CD4-positive, alpha-beta memory T cell (primary cell): ENCODE measurements at regions of chr9 and their contacts with region 1.

Region 1: GRCh38 chr9:114405294-114406034 is 17.7 kb upstream of the AKNA start:
- DNase-seq: peak; percentile 76 to 82 (median 80)
- H3K4me3 ChIP-seq: no peak overlapping the region
- H3K4me3 Mint-ChIP-seq: peak overlapping the region in 2 of 8 donors; percentile 17 to 65
- H3K27ac ChIP-seq: no peak overlapping the region
- H3K27ac Mint-ChIP-seq: peak overlapping the region in 4 of 7 donors; percentile 29 to 79 (median 54)
- H3K4me1 ChIP-seq: peaks cover 9% of the 10 kb centered on the region
- H3K4me1 Mint-ChIP-seq: peaks cover 4 to 6% (median 5%) of the 10 kb centered on the region in 4 donors
- H3K27me3 ChIP-seq: no peaks in the 10 kb centered on the region
- H3K27me3 Mint-ChIP-seq: no peaks in the 10 kb centered on the region

Region 2: GRCh38 chr9:114348906-114349482 is 56.5 kb before region 1 on chr9:
- CTCF ChIA-PET with region 1: interaction called, 7 read pairs
- POLR2A ChIA-PET with region 1: interaction called, 1,614 read pairs
- intact Hi-C with region 1: no loop called
- DNase-seq: peak in 3 of 5 donors; percentile 36 to 82 (median 37)
- H3K4me3 ChIP-seq: no peak overlapping the region
- H3K4me3 Mint-ChIP-seq: peak overlapping the region in 6 of 8 donors; percentile 17 to 47 (median 31)
- H3K27ac ChIP-seq: peak overlapping the region; percentile 30
- H3K27ac Mint-ChIP-seq: peak overlapping the region; percentile 84 to 95 (median 92)
- H3K4me1 ChIP-seq: peaks cover 42% of the 10 kb centered on the region
- H3K4me1 Mint-ChIP-seq: peaks cover 28 to 51% (median 35%) of the 10 kb centered on the region in 4 donors
- H3K27me3 ChIP-seq: no peaks in the 10 kb centered on the region
- H3K27me3 Mint-ChIP-seq: no peaks in the 10 kb centered on the region

Region 3: GRCh38 chr9:114428466-114428865 is 23.0 kb after region 1 on chr9:
- CTCF ChIA-PET with region 1: interaction called, 17 read pairs
- POLR2A ChIA-PET with region 1: interaction called, 3 read pairs
- intact Hi-C with region 1: no loop called
- DNase-seq: no peak
- H3K4me3 ChIP-seq: no peak overlapping the region
- H3K4me3 Mint-ChIP-seq: no peak overlapping the region
- H3K27ac ChIP-seq: no peak overlapping the region
- H3K27ac Mint-ChIP-seq: no peak overlapping the region
- H3K4me1 ChIP-seq: no peaks in the 10 kb centered on the region
- H3K4me1 Mint-ChIP-seq: no peaks in the 10 kb centered on the region
- H3K27me3 ChIP-seq: no peaks in the 10 kb centered on the region
- H3K27me3 Mint-ChIP-seq: no peaks in the 10 kb centered on the region

Region 4: GRCh38 chr9:114505187-114506081 is 100.0 kb after region 1 on chr9 and contains the start of gene WHRN:
- CTCF ChIA-PET with region 1: interaction called, 75 read pairs
- POLR2A ChIA-PET with region 1: interaction called, 4 read pairs
- intact Hi-C with region 1: loop called (anchors 1 kb)
- DNase-seq: peak; percentile 91 to 95 (median 93)
- H3K4me3 ChIP-seq: peak within 1 kb of the TSS; percentile 62 to 63
- H3K4me3 Mint-ChIP-seq: peak within 1 kb of the TSS; percentile 83 to 90 (median 87)
- H3K27ac ChIP-seq: peak within 1 kb of the TSS; percentile 47
- H3K27ac Mint-ChIP-seq: peak within 1 kb of the TSS; percentile 89 to 97 (median 93)
- H3K4me1 ChIP-seq: peaks cover 22% of the 10 kb centered on the region
- H3K4me1 Mint-ChIP-seq: peaks cover 10 to 45% (median 32%) of the 10 kb centered on the region in 4 donors
- H3K27me3 ChIP-seq: peaks cover 4% of the 10 kb centered on the region
- H3K27me3 Mint-ChIP-seq: peaks cover 16 to 17% of the 10 kb centered on the region in 2 donors
- total RNA-seq, gene WHRN: 8.4 to 10.1 TPM

Region 5: DNA sequence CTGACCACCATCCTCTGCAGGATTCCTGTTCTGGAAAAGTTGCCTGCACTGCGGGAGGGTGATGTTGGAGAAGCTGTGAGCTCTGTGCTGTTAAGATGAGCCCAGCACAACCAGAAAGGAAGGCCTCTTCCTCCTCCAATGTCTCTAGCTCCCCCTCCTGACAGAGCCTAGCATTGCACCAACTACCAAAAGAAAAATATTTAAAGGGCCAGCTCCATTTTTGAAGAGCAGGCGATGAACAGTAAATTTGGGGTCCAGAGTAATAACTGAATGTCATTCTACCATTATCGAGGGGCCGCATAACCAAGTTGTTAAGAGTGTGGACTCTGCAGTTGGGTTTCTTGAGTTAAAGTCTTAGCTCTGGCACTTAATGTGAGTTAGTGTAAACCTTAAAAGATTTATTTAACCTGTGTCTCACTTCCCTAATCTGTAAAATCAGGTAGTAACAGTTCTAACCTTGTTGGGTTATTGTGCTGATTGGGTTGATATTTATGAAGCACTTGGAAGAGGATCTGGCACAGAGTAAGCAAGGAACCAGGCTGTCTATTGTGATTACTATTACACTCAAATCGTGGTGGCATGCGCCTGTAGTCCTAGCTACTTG is 248.2 kb after region 1 on chr9:
- CTCF ChIA-PET with region 1: interaction called, 371 read pairs
- POLR2A ChIA-PET with region 1: interaction called, 30 read pairs
- intact Hi-C with region 1: loop called (anchors 1 kb)
- DNase-seq: peak; percentile 77 to 86 (median 83)
- H3K4me3 ChIP-seq: no peak overlapping the region
- H3K4me3 Mint-ChIP-seq: no peak overlapping the region
- H3K27ac ChIP-seq: no peak overlapping the region
- H3K27ac Mint-ChIP-seq: peak overlapping the region in 4 of 7 donors; percentile 38 to 75 (median 64)
- H3K4me1 ChIP-seq: peaks cover 12% of the 10 kb centered on the region
- H3K4me1 Mint-ChIP-seq: peaks cover 7 to 18% (median 14%) of the 10 kb centered on the region in 4 donors
- H3K27me3 ChIP-seq: no peaks in the 10 kb centered on the region
- H3K27me3 Mint-ChIP-seq: no peaks in the 10 kb centered on the region

Region 6: GRCh38 chr9:114836769-114837168 is 431.3 kb after region 1 on chr9:
- CTCF ChIA-PET with region 1: no interaction called
- POLR2A ChIA-PET with region 1: no interaction called
- intact Hi-C with region 1: no loop called
- DNase-seq: no peak
- H3K4me3 ChIP-seq: no peak overlapping the region
- H3K4me3 Mint-ChIP-seq: no peak overlapping the region
- H3K27ac ChIP-seq: no peak overlapping the region
- H3K27ac Mint-ChIP-seq: peak overlapping the region in 1 of 7 donors; percentile 24
- H3K4me1 ChIP-seq: no peaks in the 10 kb centered on the region
- H3K4me1 Mint-ChIP-seq: peaks cover 0 to 17% (median 4%) of the 10 kb centered on the region in 4 donors
- H3K27me3 ChIP-seq: no peaks in the 10 kb centered on the region
- H3K27me3 Mint-ChIP-seq: peaks cover 0 to 1% of the 10 kb centered on the region in 2 donors

Region 7: DNA sequence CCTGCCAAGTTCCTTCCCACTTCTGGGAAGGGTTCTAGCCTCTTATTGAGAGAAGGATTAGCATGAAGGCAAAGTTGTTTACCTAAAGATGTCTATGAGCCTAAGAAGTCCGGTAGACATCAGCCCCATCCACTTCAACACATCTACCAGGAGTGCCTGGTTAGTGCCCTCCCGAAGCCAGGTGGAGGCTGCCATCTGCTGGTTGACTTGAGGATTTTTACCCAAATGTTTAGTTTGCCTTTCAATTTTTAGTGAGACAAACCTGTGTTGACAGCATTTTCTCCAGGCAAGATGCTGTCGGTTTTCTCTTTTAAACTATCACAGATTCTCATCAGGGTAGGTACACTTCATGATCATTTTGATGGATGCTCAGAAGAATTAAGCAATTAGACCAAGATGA is 608.5 kb after region 1 on chr9:
- CTCF ChIA-PET with region 1: interaction called, 13 read pairs
- POLR2A ChIA-PET with region 1: no interaction called
- intact Hi-C with region 1: loop called (anchors 1 kb)
- DNase-seq: peak; percentile 78 to 79 (median 79)
- H3K4me3 ChIP-seq: no peak overlapping the region
- H3K4me3 Mint-ChIP-seq: no peak overlapping the region
- H3K27ac ChIP-seq: no peak overlapping the region
- H3K27ac Mint-ChIP-seq: peak overlapping the region in 1 of 7 donors; percentile 69
- H3K4me1 ChIP-seq: peaks cover 12% of the 10 kb centered on the region
- H3K4me1 Mint-ChIP-seq: peaks cover 19 to 21% (median 20%) of the 10 kb centered on the region in 4 donors
- H3K27me3 ChIP-seq: no peaks in the 10 kb centered on the region
- H3K27me3 Mint-ChIP-seq: peaks cover 0 to 1% of the 10 kb centered on the region in 2 donors